Activated CD4-positive, alpha-beta T cell treated with anti-CD3 and anti-CD28 coated beads for 36 hours (primary cell): ENCODE measurements at regions of chr17 and their contacts with region 1.

Region 1: GRCh38 chr17:30344283-30345088 is 10.6 kb upstream of the TMIGD1 start:
- DNase-seq: no peak
- ATAC-seq: no peak
- H3K4me3 Mint-ChIP-seq: no peak overlapping the region
- H3K27ac Mint-ChIP-seq: no peak overlapping the region
- H3K4me1 Mint-ChIP-seq: peaks cover 21% of the 10 kb centered on the region
- H3K27me3 Mint-ChIP-seq: no peaks in the 10 kb centered on the region

Region 2: GRCh38 chr17:30273373-30273772 is 71.1 kb before region 1 on chr17:
- CTCF ChIA-PET with region 1: no interaction called
- POLR2A ChIA-PET with region 1: no interaction called
- intact Hi-C with region 1: no loop called
- DNase-seq: no peak
- ATAC-seq: no peak
- H3K4me3 Mint-ChIP-seq: no peak overlapping the region
- H3K27ac Mint-ChIP-seq: no peak overlapping the region
- H3K4me1 Mint-ChIP-seq: no peaks in the 10 kb centered on the region
- H3K27me3 Mint-ChIP-seq: no peaks in the 10 kb centered on the region

Region 3: DNA sequence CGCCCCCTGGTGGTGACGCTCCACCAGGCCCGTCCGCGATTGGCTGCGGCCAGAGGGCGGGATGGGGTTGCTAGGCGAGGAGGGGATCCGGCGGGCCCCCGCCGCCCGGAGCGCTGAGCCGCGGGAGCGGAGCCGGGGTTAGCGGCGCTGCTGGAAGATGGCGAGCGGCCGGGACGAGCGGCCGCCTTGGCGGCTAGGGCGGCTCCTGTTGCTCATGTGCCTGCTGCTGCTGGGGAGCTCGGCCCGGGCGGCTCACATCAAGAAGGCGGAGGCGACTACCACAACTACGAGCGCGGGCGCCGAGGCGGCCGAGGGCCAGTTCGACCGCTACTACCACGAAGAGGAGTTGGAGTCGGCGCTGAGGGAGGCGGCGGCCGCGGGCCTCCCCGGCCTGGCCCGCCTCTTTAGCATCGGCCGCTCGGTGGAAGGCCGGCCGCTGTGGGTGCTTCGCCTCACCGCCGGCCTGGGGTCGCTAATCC is 34.4 kb after region 1 on chr17 and contains the start of gene CPD:
- CTCF ChIA-PET with region 1: interaction called, 15 read pairs
- POLR2A ChIA-PET with region 1: no interaction called
- intact Hi-C with region 1: loop called (anchors 1 to 2 kb)
- DNase-seq: peak; percentile 98
- ATAC-seq: peak; percentile 87
- H3K4me3 Mint-ChIP-seq: peak within 1 kb of the TSS; percentile 82
- H3K27ac Mint-ChIP-seq: peak within 1 kb of the TSS; percentile 80
- H3K4me1 Mint-ChIP-seq: peaks cover 63% of the 10 kb centered on the region
- H3K27me3 Mint-ChIP-seq: no peaks in the 10 kb centered on the region
- total RNA-seq, gene CPD: 29.0 to 36.3 TPM

Region 4: GRCh38 chr17:30413109-30413508 is 68.6 kb after region 1 on chr17:
- CTCF ChIA-PET with region 1: no interaction called
- POLR2A ChIA-PET with region 1: no interaction called
- intact Hi-C with region 1: loop called (anchors 5 kb)
- DNase-seq: no peak
- ATAC-seq: peak; percentile 97
- H3K4me3 Mint-ChIP-seq: no peak overlapping the region
- H3K27ac Mint-ChIP-seq: peak overlapping the region; percentile 84
- H3K4me1 Mint-ChIP-seq: peaks cover 53% of the 10 kb centered on the region
- H3K27me3 Mint-ChIP-seq: no peaks in the 10 kb centered on the region